ENCODE measurements at regions of chr11 and their contacts with region 1.

Region 1: DNA sequence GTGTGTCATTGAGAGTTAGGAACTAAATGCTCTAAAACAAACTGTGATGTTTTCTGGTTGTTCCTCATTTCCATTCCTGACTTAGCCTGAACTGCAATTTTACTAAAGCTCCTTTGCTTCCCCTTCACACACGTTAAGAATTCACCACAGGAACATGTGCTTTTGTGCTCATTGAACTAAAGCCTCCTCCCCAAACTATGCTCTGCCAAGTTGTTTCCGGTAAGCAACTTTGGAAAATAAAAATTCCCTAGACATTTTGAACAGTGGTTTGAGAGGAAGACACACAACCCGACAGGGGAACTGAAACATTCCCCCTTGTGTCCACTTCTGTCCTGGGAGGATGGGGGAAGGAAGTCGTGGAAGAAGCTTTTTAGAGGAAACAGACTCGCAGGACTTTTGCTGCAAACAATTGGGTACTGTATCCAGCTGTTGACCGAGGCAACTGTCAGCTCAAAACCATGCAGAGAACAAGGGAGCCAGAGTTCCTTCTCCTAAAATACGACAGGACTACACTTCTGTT is 66.9 kb downstream of the GAB2 start:
- DNase-seq: no peak
- ATAC-seq: peak; percentile 69
- H3K4me3 ChIP-seq: peak overlapping the region in 1 of 2 donors; percentile 30
- H3K27ac ChIP-seq: peak overlapping the region in 1 of 2 donors; percentile 38
- H3K4me1 ChIP-seq: peaks cover 5 to 14% of the 10 kb centered on the region in 2 donors
- H3K27me3 ChIP-seq: no peaks in the 10 kb centered on the region

Region 2: GRCh38 chr11:78395597-78395996 is 44.9 kb after region 1 on chr11:
- intact Hi-C with region 1: loop called in 1 of 2 experiments (anchors 1 kb)
- DNase-seq: no peak
- ATAC-seq: no peak
- H3K4me3 ChIP-seq: no peak overlapping the region
- H3K27ac ChIP-seq: no peak overlapping the region
- H3K4me1 ChIP-seq: peaks cover 8% of the 10 kb centered on the region in 2 donors
- H3K27me3 ChIP-seq: no peaks in the 10 kb centered on the region

Measured in aorta (tissue), 5 donors.